BJ (cell line): ENCODE measurements at regions of chr5 and their contacts with region 1.

Region 1: DNA sequence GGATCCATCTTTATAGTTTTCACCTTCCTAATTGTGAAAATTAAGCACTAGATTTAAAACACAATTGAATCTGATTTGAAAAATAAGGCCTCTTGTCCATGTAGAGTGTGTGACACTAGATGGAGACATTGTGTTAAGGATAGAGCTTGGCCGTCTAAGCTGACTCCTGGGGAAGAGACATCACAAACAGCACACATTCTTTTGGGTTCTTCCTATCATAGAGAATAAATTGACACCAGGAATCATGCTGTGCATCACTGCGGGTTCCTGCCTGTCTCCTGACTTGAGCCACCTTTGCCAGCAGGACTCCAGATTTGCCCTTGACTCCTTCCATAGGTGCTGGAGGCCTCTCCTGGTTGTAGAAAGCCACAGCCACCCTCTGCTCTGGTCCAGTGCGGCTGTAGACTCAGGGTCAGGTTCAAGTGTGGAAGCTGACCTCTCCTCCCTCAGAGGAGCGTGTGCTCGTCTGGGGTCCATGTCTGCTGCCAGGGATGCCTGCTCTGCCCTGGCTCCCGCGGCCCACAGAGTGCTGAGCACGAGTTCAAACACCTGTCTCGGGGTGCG is 11.2 kb downstream of the ROPN1L start:
- DNase-seq: peak; percentile 67
- H3K4me3 ChIP-seq: no peak overlapping the region
- H3K27me3 ChIP-seq: no peaks in the 10 kb centered on the region
- CTCF ChIP-seq: peak; percentile 74

Region 2: DNA sequence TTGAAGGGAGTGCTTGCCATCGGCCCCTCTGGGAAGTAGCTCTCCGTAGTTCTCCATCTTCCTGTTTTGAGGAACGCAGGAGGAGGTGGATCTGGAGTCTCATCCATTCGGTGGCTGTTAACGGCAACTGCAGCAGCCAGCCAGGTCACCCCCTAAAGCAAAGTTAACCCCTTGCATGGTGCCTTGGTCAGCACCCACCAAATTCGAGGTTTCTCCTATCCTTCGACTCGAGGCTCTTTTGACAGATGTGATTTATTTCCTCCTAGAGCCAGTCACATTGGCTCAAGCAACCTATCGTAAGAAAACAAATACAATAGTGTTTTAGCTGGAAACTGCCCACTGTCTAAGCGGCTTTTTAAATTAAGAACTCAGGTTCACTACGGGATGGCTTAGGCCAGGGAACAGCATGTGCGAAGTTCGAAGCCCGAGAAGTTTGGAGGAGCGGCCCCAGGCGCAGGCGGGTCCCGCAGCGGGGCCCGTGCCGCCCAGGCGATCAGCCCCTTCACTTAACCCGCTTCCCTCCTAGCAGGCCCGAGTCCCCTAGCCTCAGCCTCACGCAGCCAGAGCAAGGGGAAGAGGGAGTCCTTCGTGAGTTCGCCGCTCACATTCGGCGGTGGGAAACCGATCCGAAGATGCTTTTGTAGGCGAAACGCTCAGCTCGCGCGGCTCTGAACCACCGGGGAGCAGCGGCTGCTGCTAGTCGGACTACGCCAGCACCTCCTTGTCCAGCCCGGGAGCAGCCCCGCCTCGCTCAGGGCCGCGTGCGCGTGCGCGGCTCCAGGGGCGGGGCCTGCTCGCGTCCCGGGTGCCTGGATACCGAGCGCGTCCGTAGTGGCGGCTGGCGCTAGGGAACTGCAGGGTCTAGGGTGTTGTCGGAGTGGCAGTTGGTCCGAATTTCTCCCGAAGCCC is 11.5 kb before region 1 on chr5 and contains the start of gene ROPN1L:
- CTCF ChIA-PET with region 1: interaction called, 38 read pairs
- POLR2A ChIA-PET with region 1: no interaction called
- DNase-seq: peak; percentile 44
- H3K4me3 ChIP-seq: peak within 1 kb of the TSS; percentile 51
- H3K27me3 ChIP-seq: no peaks in the 10 kb centered on the region
- CTCF ChIP-seq: no peak
- polyA plus RNA-seq, gene ROPN1L: 0.54 TPM in 2 replicates

Region 3: DNA sequence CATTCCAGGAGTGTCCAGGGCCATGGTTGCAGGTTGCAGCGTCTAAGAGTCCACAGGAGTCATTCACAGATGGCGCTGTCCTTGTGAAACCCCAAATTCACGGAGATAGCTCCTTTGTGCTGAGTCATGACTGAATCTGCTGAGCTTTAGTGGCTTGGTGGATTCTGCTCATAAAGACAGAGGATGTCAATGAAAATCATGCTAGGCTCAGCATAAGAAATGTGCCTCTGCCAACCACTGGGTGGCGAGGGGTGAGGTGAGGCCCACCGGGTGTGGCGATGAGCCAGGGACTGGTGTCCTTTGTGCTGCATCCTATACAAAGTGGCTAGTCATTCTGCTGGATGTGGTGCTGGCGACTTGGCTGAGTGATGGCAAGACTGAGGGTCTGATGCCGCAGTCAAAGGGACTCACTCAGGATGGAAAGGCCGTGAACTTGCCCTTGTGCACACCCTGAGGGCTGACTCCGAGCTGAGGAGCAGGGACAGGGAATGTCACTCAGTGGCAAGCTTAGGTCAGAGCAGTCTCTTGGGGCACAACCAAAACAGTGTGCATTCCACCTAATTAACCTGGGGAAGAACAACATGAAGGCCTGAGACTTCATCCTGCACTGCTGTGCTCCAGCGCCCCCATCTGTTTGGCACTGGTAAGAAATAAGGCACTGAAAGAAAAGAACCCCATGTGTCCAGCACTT is 236.7 kb after region 1 on chr5:
- CTCF ChIA-PET with region 1: interaction called, 20 read pairs
- POLR2A ChIA-PET with region 1: no interaction called
- DNase-seq: no peak
- H3K4me3 ChIP-seq: no peak overlapping the region
- H3K27me3 ChIP-seq: no peaks in the 10 kb centered on the region
- CTCF ChIP-seq: peak; percentile 40

Region 4: GRCh38 chr5:10695055-10695649 is 242.3 kb after region 1 on chr5:
- CTCF ChIA-PET with region 1: interaction called, 20 read pairs
- POLR2A ChIA-PET with region 1: no interaction called
- DNase-seq: no peak
- H3K4me3 ChIP-seq: no peak overlapping the region
- H3K27me3 ChIP-seq: no peaks in the 10 kb centered on the region
- CTCF ChIP-seq: peak; percentile 83